Activated T-helper 2 cell treated with anti-CD3 and anti-CD28 coated beads, Interferon-gamma antibody, Interleukin-2, Interleukin-4, amounts not matched to agents 10 μg/mL and 5 μg/mL and 100 μg/mL, durations not matched to agents 14 hours and 24 hours and 36 hours (primary cell): ENCODE measurements at regions of chr10 and their contacts with region 1.

Region 1: DNA sequence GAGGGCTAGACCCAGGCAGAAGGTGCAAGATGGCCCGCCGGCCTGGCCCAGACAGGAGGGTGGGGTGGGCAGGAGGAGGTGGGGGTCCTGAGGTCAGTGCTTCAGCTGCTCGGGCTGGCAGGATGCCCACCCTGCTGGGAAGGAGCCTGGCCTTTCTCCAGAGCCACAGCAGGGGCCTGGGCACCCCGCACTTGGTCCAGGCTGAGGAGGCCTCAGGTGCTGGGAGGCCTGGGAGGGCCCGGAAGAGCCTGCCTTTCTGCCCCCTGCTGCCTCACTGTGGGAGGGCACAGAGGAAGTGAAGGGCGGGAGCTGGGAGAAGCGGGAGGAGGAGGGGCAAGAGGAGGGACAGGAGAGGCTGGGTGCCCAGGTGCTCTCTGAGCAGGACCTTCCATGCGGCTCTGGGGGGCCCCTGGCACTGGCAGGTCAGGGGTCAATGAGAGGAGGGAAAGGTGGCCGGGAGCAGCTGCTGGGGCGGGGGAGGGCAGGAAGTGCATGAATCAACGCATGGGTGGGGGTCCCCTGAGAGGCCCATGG is 49.7 kb downstream of the PWWP2B start:
- DNase-seq: peak; percentile 69
- H3K4me3 Mint-ChIP-seq: peak overlapping the region; percentile 66
- H3K27ac Mint-ChIP-seq: peak overlapping the region; percentile 96
- H3K4me1 Mint-ChIP-seq: peaks cover 26% of the 10 kb centered on the region
- H3K27me3 Mint-ChIP-seq: no peaks in the 10 kb centered on the region

Region 2: DNA sequence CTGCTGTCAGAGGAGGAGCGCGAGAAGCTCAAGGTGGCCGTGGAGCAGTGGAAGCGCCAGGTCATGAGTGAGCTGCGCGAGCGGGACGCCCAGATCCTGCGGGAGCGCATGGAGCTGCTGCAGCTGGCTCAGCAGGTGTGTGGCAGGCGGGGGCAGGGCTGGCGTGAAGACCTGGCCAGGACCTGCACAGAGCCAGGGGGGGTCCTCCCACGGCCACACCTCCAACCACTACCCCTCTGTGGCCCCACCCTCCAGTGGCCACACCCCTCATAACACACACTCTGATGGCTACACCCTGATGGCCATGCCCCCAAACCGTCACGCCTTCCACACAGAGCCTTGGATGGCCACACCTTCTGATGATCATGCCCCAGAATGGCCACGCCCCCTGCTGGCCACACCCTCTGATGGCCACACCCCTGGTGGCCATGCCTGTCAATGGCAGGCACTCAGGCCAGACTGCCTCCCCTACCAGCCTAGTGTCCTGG is 283.4 kb before region 1 on chr10:
- intact Hi-C with region 1: loop called (anchors 5 kb)
- DNase-seq: peak; percentile 66
- H3K4me3 Mint-ChIP-seq: no peak overlapping the region
- H3K27ac Mint-ChIP-seq: peak overlapping the region; percentile 57
- H3K4me1 Mint-ChIP-seq: peaks cover 40% of the 10 kb centered on the region
- H3K27me3 Mint-ChIP-seq: no peaks in the 10 kb centered on the region

Region 3: GRCh38 chr10:132331526-132332432 is 114.9 kb before region 1 on chr10 and contains the start of gene LRRC27:
- intact Hi-C with region 1: loop called (anchors 1 kb)
- DNase-seq: peak; percentile 99
- H3K4me3 Mint-ChIP-seq: peak within 1 kb of the TSS; percentile 83
- H3K27ac Mint-ChIP-seq: peak within 1 kb of the TSS; percentile 91
- H3K4me1 Mint-ChIP-seq: peaks cover 49% of the 10 kb centered on the region
- H3K27me3 Mint-ChIP-seq: no peaks in the 10 kb centered on the region
- total RNA-seq, gene LRRC27: 2.8 and 3.5 TPM in 2 replicates

Region 4: GRCh38 chr10:132387764-132388210 is 58.9 kb before region 1 on chr10:
- intact Hi-C with region 1: loop called (anchors 2 kb)
- DNase-seq: peak; percentile 58
- H3K4me3 Mint-ChIP-seq: no peak overlapping the region
- H3K27ac Mint-ChIP-seq: peak overlapping the region; percentile 80
- H3K4me1 Mint-ChIP-seq: peaks cover 2% of the 10 kb centered on the region
- H3K27me3 Mint-ChIP-seq: no peaks in the 10 kb centered on the region

Region 5: GRCh38 chr10:132458593-132459300 is 12.0 kb after region 1 on chr10:
- intact Hi-C with region 1: no loop called
- DNase-seq: peak; percentile 48
- H3K4me3 Mint-ChIP-seq: no peak overlapping the region
- H3K27ac Mint-ChIP-seq: no peak overlapping the region
- H3K4me1 Mint-ChIP-seq: no peaks in the 10 kb centered on the region
- H3K27me3 Mint-ChIP-seq: peaks cover 2% of the 10 kb centered on the region

Region 6: GRCh38 chr10:132722394-132723329 is 275.9 kb after region 1 on chr10:
- intact Hi-C with region 1: no loop called
- DNase-seq: no peak
- H3K4me3 Mint-ChIP-seq: no peak overlapping the region
- H3K27ac Mint-ChIP-seq: no peak overlapping the region
- H3K4me1 Mint-ChIP-seq: no peaks in the 10 kb centered on the region
- H3K27me3 Mint-ChIP-seq: no peaks in the 10 kb centered on the region